ENCODE measurements at regions of chr9 and their contacts with region 1.

Region 1: GRCh38 chr9:35096035-35096849 is at the start of gene PIGO:
- DNase-seq: peak; percentile 85 to 94 (median 92)
- ATAC-seq: peak; percentile 96
- H3K4me3 ChIP-seq: peak within 1 kb of the TSS; percentile 97
- H3K4me3 Mint-ChIP-seq: peak within 1 kb of the TSS; percentile 81 to 90 (median 86)
- H3K27ac ChIP-seq: peak within 1 kb of the TSS; percentile 99
- H3K27ac Mint-ChIP-seq: peak within 1 kb of the TSS; percentile 77 to 96 (median 94)
- H3K4me1 ChIP-seq: peaks cover 8 to 11% of the 10 kb centered on the region in 2 donors
- H3K4me1 Mint-ChIP-seq: peaks cover 25 to 50% (median 38%) of the 10 kb centered on the region in 7 donors
- H3K27me3 ChIP-seq: no peaks in the 10 kb centered on the region
- H3K27me3 Mint-ChIP-seq: no peaks in the 10 kb centered on the region
- total RNA-seq, gene PIGO: 27.1 to 36.0 (median 29.9) TPM

Region 2: DNA sequence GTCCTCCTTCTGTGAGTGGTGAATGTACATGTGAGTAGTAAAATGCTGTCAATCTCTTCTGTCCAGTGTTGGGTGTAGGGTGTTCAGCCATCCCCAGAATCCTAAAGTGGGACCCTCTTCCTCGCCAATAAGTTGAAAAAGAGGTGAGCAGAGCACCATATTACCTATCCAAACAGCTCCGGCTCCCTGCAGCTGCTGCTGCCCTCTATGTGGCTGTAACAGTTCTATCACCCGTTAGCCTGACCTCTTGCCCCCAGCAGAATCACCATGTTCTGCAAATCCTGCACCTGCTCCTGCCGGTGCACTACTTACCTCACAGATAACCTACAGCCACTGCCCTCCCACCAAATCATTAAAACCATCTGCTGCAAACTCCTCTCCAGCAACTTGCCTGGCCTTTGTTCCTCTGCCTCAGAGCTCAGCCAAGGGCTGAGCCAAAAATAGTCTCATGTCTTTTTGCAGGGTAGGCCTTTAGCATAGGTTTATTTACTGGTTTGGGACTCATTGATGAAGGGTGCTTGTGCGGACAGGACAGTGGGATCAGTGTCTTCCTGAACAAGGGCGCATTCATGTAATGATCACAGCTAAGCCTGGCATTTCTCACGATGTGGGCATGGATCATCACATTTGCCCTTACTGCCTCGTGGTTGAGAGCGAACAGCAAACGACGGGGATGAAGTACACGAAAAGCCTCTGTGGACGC is 336.7 kb before region 1 on chr9:
- CTCF ChIA-PET with region 1: no interaction called
- POLR2A ChIA-PET with region 1: no interaction called
- intact Hi-C with region 1: loop called in 1 of 2 experiments (anchors 2 kb)
- DNase-seq: no peak
- ATAC-seq: no peak
- H3K4me3 ChIP-seq: no peak overlapping the region
- H3K4me3 Mint-ChIP-seq: no peak overlapping the region
- H3K27ac ChIP-seq: no peak overlapping the region
- H3K27ac Mint-ChIP-seq: no peak overlapping the region
- H3K4me1 ChIP-seq: no peaks in the 10 kb centered on the region
- H3K4me1 Mint-ChIP-seq: peaks cover 0 to 6% (median 0%) of the 10 kb centered on the region in 7 donors
- H3K27me3 ChIP-seq: no peaks in the 10 kb centered on the region
- H3K27me3 Mint-ChIP-seq: peaks cover 32 to 54% (median 44%) of the 10 kb centered on the region in 5 donors

Region 3: GRCh38 chr9:35051069-35051967 is 44.9 kb before region 1 on chr9:
- CTCF ChIA-PET with region 1: interaction called, 3 read pairs
- POLR2A ChIA-PET with region 1: no interaction called
- intact Hi-C with region 1: loop called in 1 of 2 experiments (anchors 1 kb)
- DNase-seq: peak in 8 of 9 donors; percentile 23 to 53 (median 46)
- ATAC-seq: peak; percentile 79
- H3K4me3 ChIP-seq: no peak overlapping the region
- H3K4me3 Mint-ChIP-seq: peak overlapping the region in 1 of 10 donors; percentile 15
- H3K27ac ChIP-seq: no peak overlapping the region
- H3K27ac Mint-ChIP-seq: peak overlapping the region in 3 of 9 donors; percentile 0 to 22 (median 1)
- H3K4me1 ChIP-seq: no peaks in the 10 kb centered on the region
- H3K4me1 Mint-ChIP-seq: peaks cover 0 to 9% (median 4%) of the 10 kb centered on the region in 7 donors
- H3K27me3 ChIP-seq: no peaks in the 10 kb centered on the region
- H3K27me3 Mint-ChIP-seq: no peaks in the 10 kb centered on the region

Region 4: DNA sequence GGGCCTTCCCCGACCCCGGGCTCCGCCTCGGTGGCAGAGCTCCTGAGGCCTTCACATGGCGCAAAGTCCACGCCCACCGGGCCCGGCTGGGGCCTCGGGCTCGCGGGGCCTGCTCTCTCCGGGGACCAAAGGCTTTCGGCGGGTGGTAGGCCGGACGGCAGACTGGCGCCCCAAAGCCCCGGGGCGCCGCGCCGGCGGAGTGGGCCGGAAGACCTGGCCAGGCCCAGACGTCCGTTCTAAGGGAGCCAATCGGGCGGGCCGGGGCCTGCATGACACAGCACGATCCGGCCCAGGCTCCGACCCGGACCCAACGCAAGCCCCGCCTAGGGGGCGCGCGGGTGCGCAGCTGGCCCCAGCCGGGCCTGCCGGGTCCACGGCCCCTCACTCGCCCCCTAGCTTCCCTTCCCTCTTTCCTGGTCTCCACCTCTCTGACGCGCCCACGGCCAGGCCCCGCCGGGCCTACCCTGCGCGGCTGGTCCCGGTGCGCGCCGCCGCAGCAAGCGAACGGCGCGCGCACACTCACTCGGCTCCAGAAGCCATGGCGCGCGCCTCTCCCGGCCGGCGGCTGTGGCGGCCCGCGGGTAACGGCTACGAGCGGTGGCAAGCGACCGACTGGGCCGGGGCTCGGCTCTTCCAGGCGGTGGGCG is 24.3 kb before region 1 on chr9:
- CTCF ChIA-PET with region 1: interaction called, 11 read pairs
- POLR2A ChIA-PET with region 1: interaction called, 88 read pairs
- intact Hi-C with region 1: loop called (anchors 1 kb)
- DNase-seq: peak in 8 of 9 donors; percentile 67 to 83 (median 71)
- ATAC-seq: peak; percentile 70
- H3K4me3 ChIP-seq: peak overlapping the region; percentile 53
- H3K4me3 Mint-ChIP-seq: peak overlapping the region; percentile 74 to 95 (median 88)
- H3K27ac ChIP-seq: peak overlapping the region; percentile 93
- H3K27ac Mint-ChIP-seq: peak overlapping the region; percentile 81 to 96 (median 91)
- H3K4me1 ChIP-seq: peaks cover 22 to 43% of the 10 kb centered on the region in 2 donors
- H3K4me1 Mint-ChIP-seq: peaks cover 34 to 66% (median 53%) of the 10 kb centered on the region in 7 donors
- H3K27me3 ChIP-seq: no peaks in the 10 kb centered on the region
- H3K27me3 Mint-ChIP-seq: peaks cover 0 to 3% (median 0%) of the 10 kb centered on the region in 5 donors

Region 5: GRCh38 chr9:35079426-35080341 is 16.6 kb before region 1 on chr9 and contains the start of gene FANCG:
- CTCF ChIA-PET with region 1: interaction called, 19 read pairs
- POLR2A ChIA-PET with region 1: interaction called, 88 read pairs
- intact Hi-C with region 1: loop called (anchors 1 kb)
- DNase-seq: peak; percentile 60 to 87 (median 73)
- ATAC-seq: peak; percentile 98
- H3K4me3 ChIP-seq: peak within 1 kb of the TSS; percentile 84
- H3K4me3 Mint-ChIP-seq: peak within 1 kb of the TSS; percentile 84 to 98 (median 94)
- H3K27ac ChIP-seq: peak within 1 kb of the TSS; percentile 74
- H3K27ac Mint-ChIP-seq: peak within 1 kb of the TSS; percentile 76 to 99 (median 91)
- H3K4me1 ChIP-seq: peaks cover 8 to 10% of the 10 kb centered on the region in 2 donors
- H3K4me1 Mint-ChIP-seq: peaks cover 13 to 38% (median 24%) of the 10 kb centered on the region in 7 donors
- H3K27me3 ChIP-seq: no peaks in the 10 kb centered on the region
- H3K27me3 Mint-ChIP-seq: no peaks in the 10 kb centered on the region
- total RNA-seq, gene FANCG: 19.6 to 84.9 (median 26.7) TPM

Region 6: DNA sequence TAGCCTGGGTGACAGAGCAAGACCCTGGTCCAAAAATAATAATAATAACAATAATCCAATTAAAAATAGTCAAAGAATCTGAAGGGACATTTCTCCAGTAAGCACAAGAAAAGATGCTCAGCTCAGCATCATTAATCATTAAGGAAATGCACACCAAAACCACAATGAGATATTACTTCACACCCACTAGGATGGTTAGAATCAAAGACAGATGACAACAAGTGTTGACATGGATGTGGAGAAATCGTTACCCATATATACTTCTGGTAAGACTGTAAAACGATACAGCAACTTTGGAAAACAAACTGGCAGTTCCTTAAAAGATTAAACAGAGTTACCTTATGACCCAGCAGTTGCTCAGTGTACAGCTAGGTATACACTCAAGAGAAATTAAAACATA is 11.2 kb before region 1 on chr9:
- CTCF ChIA-PET with region 1: interaction called, 19 read pairs
- POLR2A ChIA-PET with region 1: interaction called, 88 read pairs
- intact Hi-C with region 1: loop called (anchors 1 kb)
- DNase-seq: no peak
- ATAC-seq: no peak
- H3K4me3 ChIP-seq: no peak overlapping the region
- H3K4me3 Mint-ChIP-seq: no peak overlapping the region
- H3K27ac ChIP-seq: no peak overlapping the region
- H3K27ac Mint-ChIP-seq: peak overlapping the region in 2 of 9 donors; percentile 1 to 2
- H3K4me1 ChIP-seq: peaks cover 0 to 2% of the 10 kb centered on the region in 2 donors
- H3K4me1 Mint-ChIP-seq: peaks cover under 1 to 4% (median 3%) of the 10 kb centered on the region in 7 donors
- H3K27me3 ChIP-seq: no peaks in the 10 kb centered on the region
- H3K27me3 Mint-ChIP-seq: no peaks in the 10 kb centered on the region

Region 7: GRCh38 chr9:35111001-35111933 is 15.0 kb after region 1 on chr9:
- CTCF ChIA-PET with region 1: interaction called, 4 read pairs
- POLR2A ChIA-PET with region 1: interaction called, 13 read pairs
- intact Hi-C with region 1: loop called (anchors 1 kb)
- DNase-seq: peak; percentile 77 to 96 (median 91)
- ATAC-seq: peak; percentile 86
- H3K4me3 ChIP-seq: peak overlapping the region; percentile 69
- H3K4me3 Mint-ChIP-seq: peak overlapping the region; percentile 55 to 87 (median 80)
- H3K27ac ChIP-seq: peak overlapping the region; percentile 71
- H3K27ac Mint-ChIP-seq: peak overlapping the region; percentile 62 to 94 (median 85)
- H3K4me1 ChIP-seq: peaks cover 36 to 37% of the 10 kb centered on the region in 2 donors
- H3K4me1 Mint-ChIP-seq: peaks cover 29 to 63% (median 58%) of the 10 kb centered on the region in 7 donors
- H3K27me3 ChIP-seq: no peaks in the 10 kb centered on the region
- H3K27me3 Mint-ChIP-seq: no peaks in the 10 kb centered on the region

Region 8: DNA sequence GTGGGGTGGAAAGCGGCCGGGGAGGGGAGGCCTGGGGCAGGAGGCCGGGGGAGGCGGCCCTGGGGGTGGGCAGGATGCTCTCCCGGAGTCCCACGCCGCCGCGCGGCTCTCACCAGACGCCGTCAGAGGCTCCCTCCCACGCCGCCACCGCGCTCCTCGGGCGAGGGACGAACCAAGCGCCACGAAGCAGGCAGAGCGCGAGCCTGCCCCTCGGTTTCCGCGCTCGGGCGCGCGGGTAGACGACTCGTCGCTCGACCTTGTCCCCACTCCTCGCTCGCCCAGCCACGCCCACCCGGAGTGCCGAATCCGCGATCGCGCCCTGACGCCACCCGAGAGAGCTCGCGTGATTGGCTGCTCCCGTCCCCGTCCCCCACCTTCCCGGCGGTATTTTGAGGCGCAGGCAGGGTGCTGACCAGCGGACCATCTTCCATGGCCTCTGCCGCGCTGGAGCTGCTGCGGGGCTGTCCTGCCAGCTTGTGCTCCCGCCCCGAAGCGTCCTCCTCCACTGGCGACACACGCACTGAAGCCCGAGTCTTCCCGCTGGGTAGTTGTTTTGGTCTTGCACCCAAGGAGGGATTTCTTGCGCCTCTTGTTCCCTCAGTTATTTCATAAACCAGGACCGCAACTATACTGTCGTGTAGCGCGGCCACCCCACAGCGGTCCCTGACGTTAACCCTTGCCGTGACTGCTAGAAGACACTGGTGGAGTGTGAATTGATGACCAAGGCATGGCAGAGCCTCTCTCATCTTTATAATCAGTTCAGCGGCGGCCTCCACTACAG is 1162.2 kb after region 1 on chr9 and contains the start of gene GNE:
- CTCF ChIA-PET with region 1: no interaction called
- POLR2A ChIA-PET with region 1: no interaction called
- intact Hi-C with region 1: no loop called
- DNase-seq: peak; percentile 92 to 99 (median 96)
- ATAC-seq: peak; percentile 96
- H3K4me3 ChIP-seq: peak within 1 kb of the TSS; percentile 98
- H3K4me3 Mint-ChIP-seq: peak within 1 kb of the TSS; percentile 96 to 100 (median 98)
- H3K27ac ChIP-seq: peak within 1 kb of the TSS; percentile 93
- H3K27ac Mint-ChIP-seq: peak within 1 kb of the TSS; percentile 92 to 98 (median 96)
- H3K4me1 ChIP-seq: peaks cover 7 to 9% of the 10 kb centered on the region in 2 donors
- H3K4me1 Mint-ChIP-seq: peaks cover 0 to 14% (median 12%) of the 10 kb centered on the region in 7 donors
- H3K27me3 ChIP-seq: no peaks in the 10 kb centered on the region
- H3K27me3 Mint-ChIP-seq: peaks cover 0 to 2% (median 0%) of the 10 kb centered on the region in 5 donors
- total RNA-seq, gene GNE: 12.6 to 18.5 (median 16.0) TPM

Measured in naive thymus-derived CD4-positive, alpha-beta T cell (primary cell).